ENCODE measurements at regions of chr5 and their contacts with region 1.

Region 1: GRCh38 chr5:158812408-158812807 is 287.3 kb downstream of the EBF1 start:
- DNase-seq: peak; percentile 99
- H3K4me3 ChIP-seq: peak overlapping the region; percentile 57
- H3K27ac ChIP-seq: peak overlapping the region; percentile 94
- H3K4me1 ChIP-seq: peaks cover 96% of the 10 kb centered on the region
- CTCF ChIP-seq: no peak

Region 2: DNA sequence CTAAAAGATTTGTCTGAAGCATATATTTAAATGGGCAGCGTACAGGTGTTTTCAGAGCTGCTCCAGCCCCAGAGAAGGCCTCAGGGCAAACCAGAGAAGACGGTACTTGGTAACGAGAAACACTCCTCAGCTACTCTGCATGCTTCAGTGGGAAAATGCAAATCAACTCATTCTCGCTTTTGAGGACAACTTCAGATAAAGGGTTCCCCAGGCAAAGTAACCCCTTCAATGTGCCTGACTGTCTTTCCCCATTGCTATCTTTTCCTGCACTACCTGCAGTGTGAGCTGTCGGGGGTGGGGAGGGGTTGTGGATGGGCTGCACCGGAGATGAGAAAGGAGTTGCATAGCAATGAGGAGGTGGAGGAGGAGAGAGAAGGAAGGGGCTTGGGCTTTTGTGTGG is 613.8 kb before region 1 on chr5:
- CTCF ChIA-PET with region 1: no interaction called
- POLR2A ChIA-PET with region 1: interaction called, 3 read pairs
- intact Hi-C with region 1: loop called (anchors 5 kb)
- DNase-seq: peak; percentile 91
- H3K4me3 ChIP-seq: peak overlapping the region; percentile 44
- H3K27ac ChIP-seq: peak overlapping the region; percentile 87
- H3K4me1 ChIP-seq: peaks cover 78% of the 10 kb centered on the region
- CTCF ChIP-seq: no peak

Region 3: DNA sequence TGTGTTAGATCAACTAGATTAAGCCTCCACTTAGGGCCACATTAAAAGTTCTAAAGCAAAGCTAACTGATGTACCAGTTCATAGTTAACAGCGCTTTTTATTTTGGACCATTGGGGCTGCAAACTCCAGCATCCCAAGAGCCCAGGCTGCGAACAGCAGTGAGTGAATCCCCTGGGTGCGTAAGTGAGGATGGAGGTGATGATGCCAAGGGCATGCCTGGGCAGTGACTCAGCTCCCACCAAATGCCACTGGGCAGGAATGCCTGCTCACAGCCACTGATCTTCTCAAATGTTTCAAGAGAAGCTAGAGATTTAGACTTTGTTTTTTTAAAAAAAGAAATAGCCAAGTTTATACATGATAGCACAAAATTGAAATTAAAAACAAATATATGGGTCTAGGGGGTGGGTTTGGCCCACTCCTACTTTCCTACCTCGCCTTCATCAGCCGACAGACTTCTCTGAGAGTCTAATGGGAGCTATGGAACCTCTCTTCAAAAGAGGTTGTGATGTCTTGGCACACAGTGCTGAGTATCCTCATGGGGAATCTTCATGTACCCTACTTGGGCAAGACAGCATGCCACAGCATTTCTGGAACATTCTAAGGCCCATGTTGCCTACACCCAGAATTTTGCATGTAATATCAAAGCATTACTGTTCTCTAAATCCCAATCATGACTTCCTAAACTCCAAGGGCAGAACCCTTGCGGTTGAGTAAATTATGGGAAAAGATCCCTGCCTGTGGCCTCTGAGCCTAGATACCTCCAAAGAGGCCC is 110.8 kb before region 1 on chr5:
- CTCF ChIA-PET with region 1: no interaction called
- POLR2A ChIA-PET with region 1: interaction called, 10 read pairs
- intact Hi-C with region 1: no loop called
- DNase-seq: no peak
- H3K4me3 ChIP-seq: no peak overlapping the region
- H3K27ac ChIP-seq: no peak overlapping the region
- H3K4me1 ChIP-seq: peaks cover 21% of the 10 kb centered on the region
- CTCF ChIP-seq: no peak

Region 4: GRCh38 chr5:158770506-158770905 is 41.9 kb before region 1 on chr5:
- CTCF ChIA-PET with region 1: interaction called, 7 read pairs
- POLR2A ChIA-PET with region 1: interaction called, 36 read pairs
- intact Hi-C with region 1: loop called (anchors 1 kb)
- DNase-seq: peak; percentile 65
- H3K4me3 ChIP-seq: no peak overlapping the region
- H3K27ac ChIP-seq: peak overlapping the region; percentile 23
- H3K4me1 ChIP-seq: peaks cover 83% of the 10 kb centered on the region
- CTCF ChIP-seq: peak; percentile 82

Region 5: GRCh38 chr5:158868546-158868945 is 56.1 kb after region 1 on chr5:
- CTCF ChIA-PET with region 1: no interaction called
- POLR2A ChIA-PET with region 1: no interaction called
- intact Hi-C with region 1: no loop called
- DNase-seq: no peak
- H3K4me3 ChIP-seq: no peak overlapping the region
- H3K27ac ChIP-seq: no peak overlapping the region
- H3K4me1 ChIP-seq: peaks cover 6% of the 10 kb centered on the region
- CTCF ChIP-seq: no peak

Region 6: GRCh38 chr5:159010661-159011442 is 198.4 kb after region 1 on chr5:
- CTCF ChIA-PET with region 1: no interaction called
- POLR2A ChIA-PET with region 1: interaction called, 12 read pairs
- intact Hi-C with region 1: loop called (anchors 5 kb)
- DNase-seq: peak; percentile 95
- H3K4me3 ChIP-seq: peak overlapping the region; percentile 73
- H3K27ac ChIP-seq: peak overlapping the region; percentile 100
- H3K4me1 ChIP-seq: peaks cover 80% of the 10 kb centered on the region
- CTCF ChIP-seq: no peak; the same call in 1 of the 2 replicates

Measured in OCI-LY7 (cell line).